ENCODE measurements at regions of chr5 and their contacts with region 1.

Region 1: GRCh38 chr5:94524841-94525697 is 93.3 kb downstream of the KIAA0825 start:
- DNase-seq: peak in 6 of 35 experiments; percentile 1 to 66 (median 3)
- ATAC-seq: peak; percentile 46 to 60 (median 56)
- H3K4me3 ChIP-seq: no peak overlapping the region
- H3K4me3 Mint-ChIP-seq: no peak overlapping the region
- H3K27ac ChIP-seq: no peak overlapping the region
- H3K27ac Mint-ChIP-seq: no peak overlapping the region
- H3K4me1 ChIP-seq: no peaks in the 10 kb centered on the region
- H3K4me1 Mint-ChIP-seq: no peaks in the 10 kb centered on the region
- H3K27me3 ChIP-seq: no peaks in the 10 kb centered on the region
- H3K27me3 Mint-ChIP-seq: no peaks in the 10 kb centered on the region

Region 2: GRCh38 chr5:94682814-94683520 is 157.9 kb after region 1 on chr5:
- CTCF ChIA-PET with region 1: interaction called in 1 of 2 experiments, 12 read pairs
- POLR2A ChIA-PET with region 1: interaction called in 1 of 2 experiments, 7 read pairs
- DNase-seq: no peak
- ATAC-seq: no peak
- H3K4me3 ChIP-seq: no peak overlapping the region
- H3K4me3 Mint-ChIP-seq: no peak overlapping the region
- H3K27ac ChIP-seq: no peak overlapping the region
- H3K27ac Mint-ChIP-seq: no peak overlapping the region
- H3K4me1 ChIP-seq: no peaks in the 10 kb centered on the region
- H3K4me1 Mint-ChIP-seq: no peaks in the 10 kb centered on the region
- H3K27me3 ChIP-seq: no peaks in the 10 kb centered on the region
- H3K27me3 Mint-ChIP-seq: no peaks in the 10 kb centered on the region

Region 3: GRCh38 chr5:94693043-94693822 is 168.2 kb after region 1 on chr5:
- CTCF ChIA-PET with region 1: interaction called in 1 of 2 experiments, 12 read pairs
- POLR2A ChIA-PET with region 1: interaction called in 1 of 2 experiments, 3 read pairs
- DNase-seq: peak in 1 of 35 experiments; percentile 62
- ATAC-seq: peak in 2 of 4 experiments; percentile 34 to 47
- H3K4me3 ChIP-seq: no peak overlapping the region
- H3K4me3 Mint-ChIP-seq: no peak overlapping the region
- H3K27ac ChIP-seq: no peak overlapping the region
- H3K27ac Mint-ChIP-seq: peak overlapping the region; percentile 1 to 2
- H3K4me1 ChIP-seq: no peaks in the 10 kb centered on the region
- H3K4me1 Mint-ChIP-seq: peaks cover 0 to 10% (median 0%) of the 10 kb centered on the region in 3 donors
- H3K27me3 ChIP-seq: no peaks in the 10 kb centered on the region
- H3K27me3 Mint-ChIP-seq: no peaks in the 10 kb centered on the region

Region 4: DNA sequence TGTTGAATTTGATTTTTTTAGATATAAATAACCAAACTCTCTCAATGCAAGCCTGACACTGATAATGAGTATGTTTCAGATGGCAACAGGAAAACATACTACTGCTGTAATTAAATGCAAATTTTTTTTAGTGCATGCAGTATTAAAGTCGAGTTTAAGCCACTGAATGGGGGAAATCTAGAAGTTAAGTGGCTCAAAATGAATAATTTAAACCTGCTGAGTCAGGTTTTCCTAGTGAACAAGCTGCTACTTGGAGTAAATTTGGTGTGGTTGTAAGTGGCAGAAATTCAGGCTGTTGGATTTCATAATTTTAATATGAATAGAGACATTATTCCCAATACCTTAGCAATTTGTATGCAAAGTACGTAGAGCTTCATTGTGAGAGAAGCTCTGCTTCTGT is 215.2 kb after region 1 on chr5:
- CTCF ChIA-PET with region 1: interaction called, 12 to 49 read pairs
- POLR2A ChIA-PET with region 1: interaction called in 1 of 2 experiments, 7 read pairs
- DNase-seq: no peak
- ATAC-seq: no peak
- H3K4me3 ChIP-seq: no peak overlapping the region
- H3K4me3 Mint-ChIP-seq: no peak overlapping the region
- H3K27ac ChIP-seq: no peak overlapping the region
- H3K27ac Mint-ChIP-seq: no peak overlapping the region
- H3K4me1 ChIP-seq: peaks cover 0 to 4% of the 10 kb centered on the region in 2 experiments
- H3K4me1 Mint-ChIP-seq: no peaks in the 10 kb centered on the region
- H3K27me3 ChIP-seq: peaks cover 0 to 11% of the 10 kb centered on the region in 2 experiments
- H3K27me3 Mint-ChIP-seq: peaks cover 0 to 5% of the 10 kb centered on the region in 2 donors

Region 5: DNA sequence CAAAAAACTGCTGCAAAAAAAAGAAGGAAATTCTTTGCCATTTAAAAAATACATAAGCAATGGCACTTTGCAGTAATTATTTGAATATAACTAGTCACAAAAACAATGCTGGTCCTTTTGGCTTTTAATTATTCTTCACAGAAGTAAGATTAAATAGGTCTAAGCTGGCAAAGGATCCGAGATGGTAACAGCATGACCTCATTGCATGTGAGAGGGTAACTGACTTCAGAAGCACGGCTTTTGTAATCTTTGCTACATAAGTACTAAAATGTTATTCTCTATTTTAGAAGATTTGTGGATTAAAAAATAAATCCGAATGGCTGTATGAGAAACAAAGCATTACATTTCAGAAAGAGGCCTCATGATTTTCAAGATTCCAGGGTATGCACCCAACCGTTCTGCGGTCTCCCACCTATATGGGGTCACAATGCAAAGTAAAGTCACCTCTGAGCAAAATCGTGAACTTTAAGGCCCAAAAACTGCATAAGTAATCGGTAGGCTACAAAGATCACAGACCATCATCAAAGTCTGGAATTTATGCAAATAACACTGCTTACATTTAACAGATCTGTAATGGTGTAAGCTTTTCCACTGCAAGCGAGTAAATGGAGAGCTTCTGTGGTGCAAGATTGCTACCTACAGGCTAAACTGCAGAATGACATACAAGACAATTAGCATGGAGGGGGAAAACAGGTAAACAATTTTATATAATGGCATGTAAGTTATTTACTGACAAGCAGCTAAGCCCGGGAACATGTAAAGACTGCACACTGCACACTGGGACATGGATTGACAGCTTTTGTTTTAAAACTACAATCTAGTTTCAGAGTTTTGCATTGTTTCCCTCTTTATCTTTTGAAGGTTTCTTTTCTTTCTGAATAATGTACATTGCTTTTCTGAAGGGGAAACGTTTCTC is 325.0 kb after region 1 on chr5:
- CTCF ChIA-PET with region 1: interaction called, 3 to 15 read pairs
- POLR2A ChIA-PET with region 1: no interaction called
- DNase-seq: peak in 17 of 35 experiments; percentile 0 to 68 (median 10)
- ATAC-seq: peak; percentile 68 to 81 (median 78)
- H3K4me3 ChIP-seq: no peak overlapping the region
- H3K4me3 Mint-ChIP-seq: no peak overlapping the region
- H3K27ac ChIP-seq: no peak overlapping the region
- H3K27ac Mint-ChIP-seq: no peak overlapping the region
- H3K4me1 ChIP-seq: peaks cover 0 to 2% of the 10 kb centered on the region in 2 experiments
- H3K4me1 Mint-ChIP-seq: peaks cover 0 to 4% (median 0%) of the 10 kb centered on the region in 3 donors
- H3K27me3 ChIP-seq: no peaks in the 10 kb centered on the region
- H3K27me3 Mint-ChIP-seq: no peaks in the 10 kb centered on the region

Region 6: GRCh38 chr5:94972268-94972667 is 447.2 kb after region 1 on chr5:
- CTCF ChIA-PET with region 1: interaction called in 1 of 2 experiments, 5 read pairs
- POLR2A ChIA-PET with region 1: interaction called in 1 of 2 experiments, 11 read pairs
- DNase-seq: no peak
- ATAC-seq: no peak
- H3K4me3 ChIP-seq: no peak overlapping the region
- H3K4me3 Mint-ChIP-seq: no peak overlapping the region
- H3K27ac ChIP-seq: no peak overlapping the region
- H3K27ac Mint-ChIP-seq: no peak overlapping the region
- H3K4me1 ChIP-seq: no peaks in the 10 kb centered on the region
- H3K4me1 Mint-ChIP-seq: no peaks in the 10 kb centered on the region
- H3K27me3 ChIP-seq: no peaks in the 10 kb centered on the region
- H3K27me3 Mint-ChIP-seq: peaks cover 0 to 5% of the 10 kb centered on the region in 2 donors